HepG2 (cell line): ENCODE measurements at regions of chr3 and their contacts with region 1.

Region 1: DNA sequence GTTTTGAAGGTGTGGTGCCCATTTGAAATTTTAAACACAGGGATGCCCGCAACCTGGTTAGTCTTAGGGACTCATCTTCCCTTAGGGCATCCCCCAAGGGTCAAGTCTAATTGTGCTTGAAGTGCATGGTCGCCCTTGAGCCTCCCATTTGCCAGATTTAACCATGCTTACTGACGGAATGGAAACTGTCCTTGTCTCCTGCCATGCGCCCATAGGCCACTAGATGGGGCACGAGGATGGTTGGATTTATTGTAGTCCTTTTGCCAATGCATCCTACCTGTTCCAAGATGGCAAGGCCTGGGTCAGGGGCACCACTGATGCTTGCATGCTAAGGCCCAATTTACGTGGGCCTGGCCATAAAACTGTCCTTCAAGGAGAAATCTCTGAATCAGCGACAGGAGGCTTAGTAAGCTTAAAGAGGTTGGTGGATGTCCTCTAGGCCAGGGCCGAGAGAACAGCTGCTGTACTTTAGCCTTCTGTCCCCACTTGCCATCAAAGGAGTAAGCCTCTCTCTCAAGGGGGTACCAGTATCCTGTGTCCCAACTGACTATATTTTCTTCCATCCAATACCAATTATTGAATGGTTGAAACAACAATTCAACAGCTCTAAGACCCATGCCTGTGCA is 355.4 kb downstream of the OTOL1 start:
- DNase-seq: peak; percentile 36
- ATAC-seq: peak; percentile 85
- H3K4me3 ChIP-seq: no peak overlapping the region
- H3K27ac ChIP-seq: no peak overlapping the region
- H3K4me1 ChIP-seq: no peaks in the 10 kb centered on the region
- H3K27me3 ChIP-seq: no peaks in the 10 kb centered on the region
- CTCF ChIP-seq: peak; percentile 89
- EP300 ChIP-seq: no peak
- POLR2A ChIP-seq: no peak
- RAD21 ChIP-seq: peak; percentile 59

Region 2: DNA sequence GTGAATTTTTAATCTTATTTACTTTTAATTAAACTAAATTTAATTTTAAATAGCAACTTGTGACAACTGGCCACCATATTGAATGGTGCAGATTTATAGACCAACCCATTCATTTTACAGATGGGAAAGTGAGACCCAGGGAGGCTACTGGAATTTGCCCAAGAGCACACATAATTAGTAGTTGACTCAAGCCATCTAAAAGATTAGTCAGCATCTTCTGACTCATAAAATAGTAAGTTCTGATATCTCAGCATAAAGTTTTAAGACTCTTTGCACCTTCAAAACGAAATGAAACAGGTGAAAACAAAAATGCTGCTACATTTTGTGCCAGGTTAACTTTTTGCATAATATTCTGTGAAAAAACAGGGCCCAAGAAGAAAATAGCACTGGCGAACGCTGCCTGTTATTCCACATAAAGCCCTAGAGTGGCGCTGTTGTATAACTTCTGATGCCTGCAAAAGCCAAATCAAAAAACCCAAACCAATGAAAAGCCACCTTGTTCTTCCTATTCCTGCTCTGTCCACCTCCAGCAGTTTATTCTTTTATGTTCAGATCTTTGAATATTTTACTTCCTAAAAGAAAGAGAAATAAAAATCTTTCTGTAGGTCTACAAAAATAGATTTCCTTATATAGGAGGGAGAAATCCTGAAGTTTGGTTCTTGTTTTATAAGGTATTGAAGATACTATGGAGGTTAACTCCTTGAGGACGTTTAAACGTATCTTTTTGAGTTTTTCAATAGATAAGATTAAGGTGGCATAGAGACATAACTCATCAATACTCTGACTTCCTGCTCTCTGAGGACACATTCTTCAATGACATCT is 292.7 kb before region 1 on chr3:
- CTCF ChIA-PET with region 1: interaction called, 3 read pairs
- POLR2A ChIA-PET with region 1: no interaction called
- in situ Hi-C with region 1: no loop called
- intact Hi-C with region 1: loop called (anchors 2 kb)
- DNase-seq: peak; percentile 27
- ATAC-seq: peak; percentile 55; the same call in 2 of the 3 replicates
- H3K4me3 ChIP-seq: no peak overlapping the region
- H3K27ac ChIP-seq: no peak overlapping the region
- H3K4me1 ChIP-seq: no peaks in the 10 kb centered on the region
- H3K27me3 ChIP-seq: no peaks in the 10 kb centered on the region
- CTCF ChIP-seq: peak; percentile 66
- EP300 ChIP-seq: no peak
- POLR2A ChIP-seq: no peak
- RAD21 ChIP-seq: 0 out of 2 replicates have a peak, but pooled peaks have one; percentile 19

Region 3: DNA sequence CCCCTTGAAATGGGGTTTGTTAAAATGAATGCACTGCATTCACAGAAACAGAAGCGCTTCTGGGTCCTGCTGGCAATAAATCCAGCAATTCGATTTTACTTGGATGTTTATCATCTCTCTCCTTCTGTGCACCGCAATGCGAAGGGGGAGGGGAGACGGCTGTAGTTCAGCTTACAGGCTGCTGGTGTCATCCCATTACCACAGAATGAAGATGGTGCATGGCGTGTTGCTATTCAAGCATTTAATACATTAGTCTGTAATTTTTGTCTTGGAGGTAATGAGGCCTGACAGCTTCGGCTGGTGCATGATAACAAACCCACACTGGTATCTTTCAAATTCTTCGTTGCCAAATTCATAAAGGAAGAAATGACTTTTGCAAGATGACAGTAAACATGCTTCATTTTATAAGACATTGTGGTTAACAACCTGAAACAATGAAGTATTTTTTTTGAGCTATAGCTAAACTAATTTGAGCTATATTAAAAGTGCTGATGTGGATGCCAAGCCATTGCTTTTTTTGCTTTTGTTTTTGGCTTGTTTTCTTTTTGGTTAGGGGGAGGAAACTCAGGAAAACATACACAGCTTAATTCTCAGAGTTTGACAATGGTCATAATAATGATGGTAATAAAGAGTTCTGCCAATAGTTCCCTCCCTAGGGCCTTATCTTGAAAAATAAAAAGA is 62.8 kb after region 1 on chr3:
- CTCF ChIA-PET with region 1: no interaction called
- POLR2A ChIA-PET with region 1: no interaction called
- in situ Hi-C with region 1: no loop called
- intact Hi-C with region 1: loop called (anchors 2 kb)
- DNase-seq: peak; percentile 44
- ATAC-seq: peak; percentile 94
- H3K4me3 ChIP-seq: peak overlapping the region in 1 of 3 experiments; percentile 1; a peak in 1 of 6 replicates
- H3K27ac ChIP-seq: no peak overlapping the region
- H3K4me1 ChIP-seq: peaks cover 25% of the 10 kb centered on the region
- H3K27me3 ChIP-seq: no peaks in the 10 kb centered on the region
- CTCF ChIP-seq: peak; percentile 79
- EP300 ChIP-seq: no peak; a peak in 1 of 4 replicates
- POLR2A ChIP-seq: no peak
- RAD21 ChIP-seq: no peak

Region 4: DNA sequence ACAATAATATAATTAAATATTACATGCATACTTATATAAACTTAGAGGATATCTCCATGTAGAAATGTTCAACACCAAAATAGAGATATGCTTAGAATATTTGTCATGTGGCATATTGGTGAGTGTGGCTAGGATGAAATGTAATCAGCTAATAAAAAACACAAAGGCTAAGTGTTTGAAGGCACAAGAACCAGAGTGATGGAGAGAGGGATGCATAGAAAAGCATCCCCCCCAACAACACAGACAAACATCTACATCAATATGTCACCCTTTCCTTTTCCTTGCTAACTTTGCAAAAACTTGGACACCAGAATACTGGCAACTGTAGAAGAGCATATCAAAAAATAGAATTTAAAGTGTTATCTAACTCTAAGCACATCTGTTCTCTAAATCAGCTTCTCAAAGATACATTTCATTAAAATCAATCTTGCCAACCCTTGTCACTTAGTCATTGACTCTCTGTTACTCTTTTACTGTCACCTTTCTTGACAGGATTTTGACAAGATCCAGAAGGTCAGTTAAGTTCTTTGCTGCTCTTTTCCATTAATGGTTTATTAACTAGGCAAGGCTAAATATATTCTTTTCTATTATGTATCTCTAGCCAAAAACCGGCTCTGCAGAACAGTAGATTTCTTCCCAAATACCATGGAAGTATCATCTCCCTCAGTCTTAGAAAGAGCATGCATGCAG is 340.4 kb after region 1 on chr3:
- CTCF ChIA-PET with region 1: no interaction called
- POLR2A ChIA-PET with region 1: no interaction called
- in situ Hi-C with region 1: no loop called
- intact Hi-C with region 1: loop called (anchors 2 kb)
- DNase-seq: no peak
- ATAC-seq: no peak
- H3K4me3 ChIP-seq: no peak overlapping the region
- H3K27ac ChIP-seq: no peak overlapping the region
- H3K4me1 ChIP-seq: no peaks in the 10 kb centered on the region
- H3K27me3 ChIP-seq: no peaks in the 10 kb centered on the region
- CTCF ChIP-seq: no peak
- EP300 ChIP-seq: no peak
- POLR2A ChIP-seq: no peak
- RAD21 ChIP-seq: no peak

Region 5: GRCh38 chr3:163043074-163043473 is 1191.0 kb after region 1 on chr3:
- CTCF ChIA-PET with region 1: interaction called, 3 read pairs
- POLR2A ChIA-PET with region 1: no interaction called
- in situ Hi-C with region 1: loop called (anchors 25 kb)
- intact Hi-C with region 1: no loop called
- DNase-seq: peak; percentile 25
- ATAC-seq: peak; percentile 67
- H3K4me3 ChIP-seq: no peak overlapping the region
- H3K27ac ChIP-seq: no peak overlapping the region
- H3K4me1 ChIP-seq: no peaks in the 10 kb centered on the region
- H3K27me3 ChIP-seq: no peaks in the 10 kb centered on the region; a peak in 1 of 5 replicates
- CTCF ChIP-seq: no peak; the same call in 1 of the 2 replicates
- EP300 ChIP-seq: no peak
- POLR2A ChIP-seq: no peak
- RAD21 ChIP-seq: no peak

Region 6: DNA sequence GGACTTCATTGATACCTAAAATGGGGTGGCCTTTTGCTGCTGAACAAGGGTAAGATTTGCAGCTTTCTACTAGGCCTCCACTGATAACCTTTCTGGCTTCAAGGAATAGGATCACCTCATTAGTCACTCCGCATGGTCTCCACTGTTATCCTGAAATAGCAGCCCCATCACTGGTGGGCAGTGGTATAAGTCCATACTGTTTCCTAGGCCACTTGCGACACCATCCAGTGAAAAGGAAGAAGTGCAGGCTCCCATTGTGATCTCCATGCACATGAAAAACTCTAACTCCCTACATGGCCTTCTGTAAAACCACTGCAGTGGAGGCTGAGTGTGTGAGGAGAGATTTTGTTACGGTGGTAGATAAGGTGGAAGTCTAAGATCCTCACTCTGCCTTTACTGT is 1770.3 kb after region 1 on chr3:
- CTCF ChIA-PET with region 1: no interaction called
- POLR2A ChIA-PET with region 1: no interaction called
- in situ Hi-C with region 1: no loop called
- intact Hi-C with region 1: loop called (anchors 5 kb)
- DNase-seq: peak; percentile 43
- ATAC-seq: peak; percentile 98
- H3K4me3 ChIP-seq: no peak overlapping the region
- H3K27ac ChIP-seq: no peak overlapping the region
- H3K4me1 ChIP-seq: no peaks in the 10 kb centered on the region
- H3K27me3 ChIP-seq: no peaks in the 10 kb centered on the region
- CTCF ChIP-seq: peak; percentile 56
- EP300 ChIP-seq: no peak
- POLR2A ChIP-seq: no peak
- RAD21 ChIP-seq: no peak